SK-N-SH (cell line): ENCODE measurements at regions of chr17 and their contacts with region 1.

Region 1: DNA sequence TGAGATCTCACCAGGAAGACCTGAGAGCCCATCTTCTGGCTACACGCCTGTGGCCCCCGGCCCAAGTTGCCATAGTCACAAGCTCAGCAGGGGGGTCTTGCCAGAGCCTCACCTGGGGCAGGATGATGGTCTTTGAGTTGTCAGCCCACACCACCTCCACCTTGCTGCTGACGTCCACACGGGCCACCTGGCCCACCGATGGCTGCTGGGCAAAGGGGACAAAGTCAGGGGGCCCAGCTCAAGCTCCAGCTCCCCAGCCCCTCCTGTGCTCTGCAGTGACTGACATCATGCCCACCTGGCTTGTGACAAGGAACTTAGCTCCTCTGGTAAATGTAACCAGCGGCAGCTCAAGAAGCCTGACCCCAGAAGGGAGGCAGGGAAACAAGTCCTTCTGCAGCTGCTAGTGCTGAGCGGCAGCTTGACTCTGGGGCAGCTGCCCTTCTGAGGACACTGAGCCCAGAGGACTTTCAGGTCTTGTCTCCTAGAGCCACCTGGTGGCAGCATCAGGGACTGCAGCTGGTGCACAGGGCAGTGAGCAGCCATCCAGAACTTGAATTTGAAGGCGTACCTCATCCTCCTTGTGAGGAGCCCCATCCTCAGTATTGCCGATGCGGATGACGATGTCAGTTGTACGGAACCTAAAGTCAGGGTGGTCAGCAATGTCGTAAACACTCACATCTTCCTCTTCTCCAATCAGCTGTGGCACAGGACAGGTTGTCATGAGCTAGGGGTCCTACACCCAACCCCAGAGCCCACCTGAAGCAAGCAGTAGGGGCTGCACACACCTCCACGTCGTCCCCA is 13.5 kb downstream of the SPHK1 start:
- DNase-seq: peak; percentile 92
- H3K4me3 ChIP-seq: no peak overlapping the region; a peak in 1 of 4 replicates
- H3K27ac ChIP-seq: no peak overlapping the region; a peak in 1 of 4 replicates
- H3K4me1 ChIP-seq: peaks cover 0 to 3% of the 10 kb centered on the region in 2 experiments; a peak in 1 of 4 replicates
- H3K27me3 ChIP-seq: no peaks in the 10 kb centered on the region
- CTCF ChIP-seq: peak; percentile 99
- EP300 ChIP-seq: no peak
- RAD21 ChIP-seq: peak; percentile 96

Region 2: DNA sequence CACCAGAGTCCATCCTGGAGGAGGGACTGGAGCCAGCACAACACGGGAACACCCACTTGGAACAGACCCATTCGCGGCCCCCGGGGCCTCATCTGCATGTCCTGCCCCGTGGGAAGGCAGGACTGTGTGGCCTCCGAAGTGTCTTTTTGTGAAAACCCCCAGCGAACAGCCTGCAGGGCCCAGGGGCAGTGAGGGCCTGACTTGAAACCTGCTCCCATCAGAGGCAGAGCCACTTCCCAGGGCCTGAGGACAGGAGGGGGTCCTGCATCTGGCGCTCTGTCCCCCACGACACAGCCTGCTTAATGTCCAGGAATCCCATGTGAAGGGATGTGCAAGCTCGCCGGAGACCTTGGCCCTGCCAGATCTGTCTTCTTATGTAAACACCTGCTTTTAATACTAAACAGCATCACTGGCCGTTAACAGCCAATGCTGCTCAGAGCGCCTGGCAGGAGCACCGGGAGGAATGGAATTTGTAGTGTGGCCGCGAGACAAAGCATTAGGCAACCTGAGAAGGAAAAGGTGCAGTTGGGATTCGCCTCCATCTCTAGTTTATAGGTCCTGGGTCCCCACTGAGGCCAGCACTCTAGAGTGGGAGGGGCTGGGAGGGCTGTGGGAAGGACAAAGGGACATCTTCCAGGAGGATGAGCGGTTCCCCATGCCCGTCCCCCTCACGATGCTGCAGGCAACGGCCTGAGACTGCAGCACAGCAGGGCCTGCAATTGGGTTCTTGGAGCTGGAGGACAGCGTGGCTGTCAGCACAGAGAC is 361.2 kb before region 1 on chr17:
- CTCF ChIA-PET with region 1: no interaction called
- POLR2A ChIA-PET with region 1: no interaction called
- DNase-seq: peak; percentile 89
- H3K4me3 ChIP-seq: no peak overlapping the region
- H3K27ac ChIP-seq: peak overlapping the region in 1 of 2 experiments; percentile 47; a peak in 2 of 4 replicates
- H3K4me1 ChIP-seq: peaks cover 0 to 12% of the 10 kb centered on the region in 2 experiments; a peak in 1 of 4 replicates
- H3K27me3 ChIP-seq: no peaks in the 10 kb centered on the region
- CTCF ChIP-seq: no peak
- EP300 ChIP-seq: peak in 1 of 2 experiments; percentile 23; a peak in 1 of 4 replicates
- RAD21 ChIP-seq: no peak

Region 3: GRCh38 chr17:76160896-76161528 is 236.9 kb before region 1 on chr17:
- CTCF ChIA-PET with region 1: no interaction called
- POLR2A ChIA-PET with region 1: no interaction called
- DNase-seq: no peak
- H3K4me3 ChIP-seq: no peak overlapping the region
- H3K27ac ChIP-seq: no peak overlapping the region
- H3K4me1 ChIP-seq: no peaks in the 10 kb centered on the region
- H3K27me3 ChIP-seq: no peaks in the 10 kb centered on the region
- CTCF ChIP-seq: no peak
- EP300 ChIP-seq: no peak
- RAD21 ChIP-seq: no peak

Region 4: GRCh38 chr17:76327696-76328095 is 70.2 kb before region 1 on chr17:
- CTCF ChIA-PET with region 1: interaction called, 44 read pairs
- POLR2A ChIA-PET with region 1: no interaction called
- DNase-seq: no peak
- H3K4me3 ChIP-seq: no peak overlapping the region
- H3K27ac ChIP-seq: no peak overlapping the region
- H3K4me1 ChIP-seq: peaks cover 0 to 3% of the 10 kb centered on the region in 2 experiments; a peak in 1 of 4 replicates
- H3K27me3 ChIP-seq: no peaks in the 10 kb centered on the region
- CTCF ChIP-seq: no peak
- EP300 ChIP-seq: no peak
- RAD21 ChIP-seq: no peak

Region 5: GRCh38 chr17:76365256-76365903 is 32.5 kb before region 1 on chr17:
- CTCF ChIA-PET with region 1: interaction called, 18 read pairs
- POLR2A ChIA-PET with region 1: no interaction called
- DNase-seq: no peak
- H3K4me3 ChIP-seq: no peak overlapping the region
- H3K27ac ChIP-seq: no peak overlapping the region
- H3K4me1 ChIP-seq: peaks cover 3 to 23% of the 10 kb centered on the region in 2 experiments; a peak in 2 of 4 replicates
- H3K27me3 ChIP-seq: no peaks in the 10 kb centered on the region
- CTCF ChIP-seq: no peak
- EP300 ChIP-seq: no peak
- RAD21 ChIP-seq: no peak

Region 6: GRCh38 chr17:76384222-76384986 is 13.5 kb before region 1 on chr17 and contains the start of gene SPHK1:
- CTCF ChIA-PET with region 1: interaction called, 312 read pairs
- POLR2A ChIA-PET with region 1: interaction called, 3 read pairs
- DNase-seq: peak; percentile 91
- H3K4me3 ChIP-seq: peak within 1 kb of the TSS; percentile 53 to 78
- H3K27ac ChIP-seq: peak within 1 kb of the TSS in 1 of 2 experiments; percentile 80; a peak in 2 of 4 replicates
- H3K4me1 ChIP-seq: peaks cover 0 to 40% of the 10 kb centered on the region in 2 experiments; a peak in 1 of 4 replicates
- H3K27me3 ChIP-seq: no peaks in the 10 kb centered on the region
- CTCF ChIP-seq: no peak
- EP300 ChIP-seq: no peak
- RAD21 ChIP-seq: no peak
- polyA plus RNA-seq, gene SPHK1: 7.7 and 12.3 TPM in 2 replicates

Region 7: GRCh38 chr17:76437467-76438402 is 39.8 kb after region 1 on chr17:
- CTCF ChIA-PET with region 1: interaction called, 12 read pairs
- POLR2A ChIA-PET with region 1: no interaction called
- DNase-seq: no peak
- H3K4me3 ChIP-seq: no peak overlapping the region
- H3K27ac ChIP-seq: no peak overlapping the region
- H3K4me1 ChIP-seq: peaks cover 0 to 11% of the 10 kb centered on the region in 2 experiments; a peak in 2 of 4 replicates
- H3K27me3 ChIP-seq: no peaks in the 10 kb centered on the region
- CTCF ChIP-seq: no peak
- EP300 ChIP-seq: no peak
- RAD21 ChIP-seq: no peak

Region 8: GRCh38 chr17:76467366-76467765 is 69.5 kb after region 1 on chr17 and contains the start of gene AANAT:
- CTCF ChIA-PET with region 1: interaction called, 11 read pairs
- POLR2A ChIA-PET with region 1: no interaction called
- DNase-seq: no peak
- H3K4me3 ChIP-seq: no peak within 1 kb of the TSS
- H3K27ac ChIP-seq: no peak within 1 kb of the TSS
- H3K4me1 ChIP-seq: no peaks in the 10 kb centered on the region; a peak in 1 of 4 replicates
- H3K27me3 ChIP-seq: no peaks in the 10 kb centered on the region
- CTCF ChIP-seq: no peak
- EP300 ChIP-seq: no peak
- RAD21 ChIP-seq: no peak
- polyA plus RNA-seq, gene AANAT: 0.26 TPM in 1 of 2 replicates, not detected in the other

Region 9: GRCh38 chr17:76506408-76507349 is 108.8 kb after region 1 on chr17:
- CTCF ChIA-PET with region 1: interaction called, 32 read pairs
- POLR2A ChIA-PET with region 1: no interaction called
- DNase-seq: peak; percentile 95
- H3K4me3 ChIP-seq: no peak overlapping the region; a peak in 1 of 4 replicates
- H3K27ac ChIP-seq: no peak overlapping the region
- H3K4me1 ChIP-seq: peaks cover 0 to 14% of the 10 kb centered on the region in 2 experiments; a peak in 1 of 4 replicates
- H3K27me3 ChIP-seq: peaks cover 9% of the 10 kb centered on the region
- CTCF ChIP-seq: peak; percentile 96
- EP300 ChIP-seq: no peak
- RAD21 ChIP-seq: peak; percentile 99